ENCODE measurements at regions of chr12 and their contacts with region 1.

Region 1: GRCh38 chr12:53159195-53159839 is 21.2 kb upstream of the ZNF740 start:
- DNase-seq: peak; percentile 64 to 90
- ATAC-seq: peak; percentile 92

Region 2: DNA sequence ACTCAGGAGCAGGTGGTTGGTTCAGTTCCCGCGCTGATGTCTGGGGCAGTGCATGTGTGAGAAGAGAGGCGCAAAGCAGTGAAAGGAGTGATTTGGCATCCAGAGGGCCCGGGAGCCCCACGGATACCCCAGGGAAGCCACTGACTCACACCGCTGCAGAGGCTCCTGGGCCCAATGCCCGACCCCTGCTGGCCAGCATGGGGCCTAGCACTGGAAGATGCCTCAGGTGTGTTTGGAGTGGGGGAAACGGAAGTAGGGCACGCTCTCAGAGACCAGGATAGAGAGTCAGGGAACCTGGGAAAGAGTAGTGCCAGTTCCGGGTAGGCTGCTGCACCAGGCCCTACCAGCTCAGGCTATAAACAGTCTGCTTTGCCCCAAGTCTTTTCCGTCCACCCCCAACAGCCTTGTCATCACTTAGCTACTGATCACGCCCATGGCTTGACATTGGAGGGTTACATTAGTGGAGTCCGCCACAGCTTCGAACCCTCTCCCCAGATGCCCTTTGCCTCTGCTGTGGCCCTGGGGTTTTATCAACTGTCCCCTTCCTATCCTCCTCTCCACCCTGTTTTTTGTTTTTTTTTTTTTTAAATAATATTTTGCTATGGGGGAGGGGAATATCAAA is 30.9 kb after region 1 on chr12:
- intact Hi-C with region 1: loop called in 1 of 2 experiments (anchors 5 kb)
- DNase-seq: peak; percentile 47 to 49
- ATAC-seq: peak; percentile 87

Measured in left colon (tissue), 2 donors.